H1 (cell line): ENCODE measurements at regions of chr19 and their contacts with region 1.

Region 1: DNA sequence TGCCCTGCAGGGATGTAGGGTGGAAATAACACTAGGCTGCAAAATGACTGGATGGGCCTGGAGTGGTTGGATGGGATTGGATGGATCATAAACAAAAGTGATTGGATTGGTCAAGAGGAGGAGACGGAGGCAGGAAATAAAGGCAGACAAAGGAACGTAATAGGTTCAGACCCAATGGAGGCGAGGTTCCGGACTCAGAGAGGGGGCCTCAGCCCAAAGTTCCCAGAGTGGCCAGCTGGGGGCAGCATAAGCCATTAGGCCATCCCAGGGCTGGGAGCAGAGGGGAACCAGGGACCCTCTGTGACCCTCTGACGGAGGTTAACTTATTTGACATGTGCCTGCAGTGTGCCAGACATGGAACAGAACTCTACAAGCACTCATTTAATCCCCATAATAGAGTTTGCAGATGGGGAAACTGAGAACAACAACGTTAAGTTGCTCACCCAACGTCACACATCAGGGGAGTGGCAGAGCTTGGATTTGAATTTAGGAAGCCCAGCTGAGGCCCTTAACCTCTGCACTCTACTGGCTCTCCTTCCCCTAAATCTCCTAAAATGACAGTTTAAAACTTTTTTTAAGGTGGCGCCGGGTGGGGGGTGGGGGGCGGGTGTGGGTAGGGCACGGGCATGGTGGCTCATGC is 15.3 kb upstream of the MAP1S start:
- DNase-seq: peak in 1 of 2 experiments; percentile 95
- H3K4me3 ChIP-seq: no peak overlapping the region
- H3K27ac ChIP-seq: no peak overlapping the region
- H3K4me1 ChIP-seq: no peaks in the 10 kb centered on the region; a peak in 2 of 7 replicates
- H3K27me3 ChIP-seq: peaks cover 0 to 6% (median 5%) of the 10 kb centered on the region in 4 experiments; a peak in 4 of 7 replicates
- CTCF ChIP-seq: peak; percentile 81 to 93 (median 89)
- EP300 ChIP-seq: no peak
- POLR2A ChIP-seq: no peak
- RAD21 ChIP-seq: peak; percentile 71 to 80

Region 2: DNA sequence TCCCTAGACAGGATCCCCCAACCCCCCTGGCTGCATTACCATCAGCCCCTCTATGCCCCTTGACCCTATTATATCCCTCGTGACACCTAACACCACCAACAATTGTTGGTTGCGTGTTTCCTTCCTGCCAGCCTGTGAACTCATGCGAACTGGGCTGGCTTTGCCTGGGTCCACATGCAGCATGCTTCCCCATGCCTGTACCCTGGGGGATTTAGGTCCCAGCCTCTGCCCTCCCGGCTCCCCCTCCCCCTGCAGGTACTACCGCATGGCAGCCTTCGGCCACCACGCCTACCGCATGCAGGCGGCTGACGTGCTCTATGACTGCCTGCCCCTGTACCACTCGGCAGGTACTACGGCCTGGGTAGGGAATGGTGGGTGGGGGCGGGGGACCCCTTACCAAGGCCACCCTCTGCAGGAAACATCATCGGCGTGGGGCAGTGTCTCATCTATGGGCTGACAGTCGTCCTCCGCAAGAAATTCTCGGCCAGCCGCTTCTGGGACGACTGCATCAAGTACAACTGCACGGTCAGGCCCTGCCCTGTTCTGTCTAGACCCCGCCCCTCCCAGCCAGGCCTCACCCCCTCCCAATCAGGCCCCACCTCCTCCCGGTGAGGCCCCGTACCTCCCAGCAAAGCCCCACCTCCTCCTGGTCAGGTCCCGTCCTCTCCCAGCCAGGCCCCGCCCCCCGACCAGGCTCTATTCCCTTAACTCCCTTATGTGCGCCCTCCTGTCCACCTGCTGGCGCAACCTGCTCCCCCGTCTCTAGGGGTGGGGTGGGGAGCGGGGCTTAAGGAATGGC is 215.2 kb before region 1 on chr19:
- CTCF ChIA-PET with region 1: no interaction called
- POLR2A ChIA-PET with region 1: no interaction called
- DNase-seq: peak; percentile 96 to 97
- H3K4me3 ChIP-seq: peak overlapping the region; percentile 14 to 65 (median 50); a peak in 7 of 8 replicates
- H3K27ac ChIP-seq: no peak overlapping the region
- H3K4me1 ChIP-seq: peaks cover 0 to 19% (median 15%) of the 10 kb centered on the region in 4 experiments; a peak in 6 of 7 replicates
- H3K27me3 ChIP-seq: no peaks in the 10 kb centered on the region
- CTCF ChIP-seq: peak; percentile 71 to 86 (median 84)
- EP300 ChIP-seq: no peak
- POLR2A ChIP-seq: peak; percentile 29 to 71; a peak in 2 of 3 replicates
- RAD21 ChIP-seq: peak; percentile 48 to 58

Region 3: GRCh38 chr19:17681505-17682125 is 22.3 kb before region 1 on chr19:
- CTCF ChIA-PET with region 1: interaction called, 14 read pairs
- POLR2A ChIA-PET with region 1: interaction called, 3 read pairs
- DNase-seq: peak in 1 of 2 experiments; percentile 90
- H3K4me3 ChIP-seq: no peak overlapping the region
- H3K27ac ChIP-seq: no peak overlapping the region
- H3K4me1 ChIP-seq: peaks cover 2 to 17% (median 10%) of the 10 kb centered on the region in 4 experiments
- H3K27me3 ChIP-seq: no peaks in the 10 kb centered on the region
- CTCF ChIP-seq: no peak
- EP300 ChIP-seq: no peak
- POLR2A ChIP-seq: no peak
- RAD21 ChIP-seq: no peak

Region 4: GRCh38 chr19:17687857-17688784 is 15.8 kb before region 1 on chr19 and contains the start of gene UNC13A:
- CTCF ChIA-PET with region 1: interaction called, 24 read pairs
- POLR2A ChIA-PET with region 1: interaction called, 6 read pairs
- DNase-seq: peak in 1 of 2 experiments; percentile 98
- H3K4me3 ChIP-seq: peak within 1 kb of the TSS; percentile 72 to 97 (median 84)
- H3K27ac ChIP-seq: no peak within 1 kb of the TSS
- H3K4me1 ChIP-seq: peaks cover 5 to 15% (median 11%) of the 10 kb centered on the region in 4 experiments
- H3K27me3 ChIP-seq: no peaks in the 10 kb centered on the region
- CTCF ChIP-seq: no peak; a peak in 1 of 4 replicates
- EP300 ChIP-seq: no peak; a peak in 1 of 3 replicates
- POLR2A ChIP-seq: 0 out of 3 replicates have a peak, but pooled peaks of 1 of the 2 experiments have one; percentile 19
- RAD21 ChIP-seq: no peak; a peak in 1 of 4 replicates
- total RNA-seq, gene UNC13A: 45.0 and 47.6 TPM in 2 replicates

Region 5: DNA sequence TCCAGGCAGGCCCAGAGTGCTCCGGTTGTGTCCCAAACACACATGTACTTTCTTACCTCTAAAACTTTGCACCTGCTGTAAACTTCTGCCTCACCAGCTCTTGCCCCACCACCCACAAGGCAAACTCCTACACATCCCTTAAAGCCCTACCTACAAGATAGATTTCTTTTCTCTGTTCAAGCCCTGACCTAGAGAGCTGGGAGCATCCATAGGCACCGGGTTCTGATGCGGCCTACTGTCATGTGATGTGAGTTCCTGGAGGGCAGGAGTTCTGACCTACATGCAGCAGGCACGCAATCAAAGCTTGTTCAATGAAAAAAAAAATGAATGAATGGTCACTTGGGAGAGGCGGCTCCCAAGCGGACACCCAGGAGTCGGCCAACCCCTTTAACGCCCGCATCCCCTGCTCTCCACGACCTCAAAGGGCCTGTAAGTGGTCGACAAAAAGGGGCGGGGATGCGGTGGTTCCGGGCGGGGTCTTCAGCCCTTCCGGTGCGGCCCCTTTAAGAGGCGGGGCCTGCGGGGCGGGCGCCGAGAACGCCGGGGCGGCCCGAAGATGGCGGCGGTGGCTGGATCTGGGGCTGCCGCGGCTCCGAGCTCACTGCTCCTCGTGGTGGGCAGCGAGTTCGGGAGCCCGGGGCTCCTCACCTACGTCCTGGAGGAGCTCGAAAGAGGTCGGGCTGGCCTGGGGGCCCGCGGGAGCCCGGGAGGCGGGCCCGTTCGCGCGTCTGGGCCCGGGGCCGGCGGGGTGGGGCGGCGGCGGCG is 15.2 kb after region 1 on chr19 and contains the start of gene MAP1S:
- CTCF ChIA-PET with region 1: interaction called, 34 read pairs
- POLR2A ChIA-PET with region 1: interaction called, 13 read pairs
- DNase-seq: peak; percentile 50 to 91
- H3K4me3 ChIP-seq: peak within 1 kb of the TSS; percentile 75 to 100 (median 83)
- H3K27ac ChIP-seq: no peak within 1 kb of the TSS; the same call in 1 of the 2 replicates
- H3K4me1 ChIP-seq: peaks cover 4 to 13% (median 6%) of the 10 kb centered on the region in 4 experiments
- H3K27me3 ChIP-seq: no peaks in the 10 kb centered on the region
- CTCF ChIP-seq: no peak
- EP300 ChIP-seq: no peak
- POLR2A ChIP-seq: peak in 1 of 2 experiments; percentile 89; a peak in 2 of 3 replicates
- RAD21 ChIP-seq: no peak
- total RNA-seq, gene MAP1S: 115 and 116 TPM in 2 replicates

Region 6: GRCh38 chr19:17749912-17750317 is 46.0 kb after region 1 on chr19:
- CTCF ChIA-PET with region 1: interaction called, 10 read pairs
- POLR2A ChIA-PET with region 1: no interaction called
- DNase-seq: no peak
- H3K4me3 ChIP-seq: no peak overlapping the region
- H3K27ac ChIP-seq: no peak overlapping the region
- H3K4me1 ChIP-seq: peaks cover 0 to 5% (median under 1%) of the 10 kb centered on the region in 4 experiments; a peak in 4 of 7 replicates
- H3K27me3 ChIP-seq: no peaks in the 10 kb centered on the region
- CTCF ChIP-seq: no peak
- EP300 ChIP-seq: no peak
- POLR2A ChIP-seq: no peak
- RAD21 ChIP-seq: no peak

Region 7: DNA sequence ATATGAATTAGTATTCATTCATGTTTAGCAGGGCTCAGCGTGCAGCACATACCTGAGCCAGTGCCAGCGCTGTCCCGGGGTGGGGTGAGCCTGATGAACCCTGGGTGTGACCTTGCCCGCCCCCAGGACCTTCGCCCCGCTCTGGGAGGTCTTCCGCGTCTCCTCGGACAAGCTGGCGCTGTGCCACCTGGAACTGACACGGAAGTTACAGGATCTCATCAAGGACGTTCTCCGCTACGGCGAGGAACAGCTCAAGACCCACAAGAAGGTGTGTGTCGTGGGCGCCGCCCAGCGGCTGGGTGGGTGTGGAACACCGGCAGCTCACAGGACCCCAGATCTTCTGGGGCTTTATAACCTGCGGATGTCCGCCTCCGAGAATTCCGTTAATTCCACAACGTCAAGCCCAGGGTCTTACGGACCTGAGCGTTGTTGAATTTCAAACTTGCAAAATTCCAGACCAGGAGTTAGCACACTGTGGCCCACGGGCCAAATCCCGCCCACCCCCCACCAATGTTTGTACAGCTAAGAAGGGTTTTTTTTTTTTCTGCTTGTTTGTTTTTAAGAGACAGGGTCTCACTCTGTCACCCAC is 62.7 kb after region 1 on chr19:
- CTCF ChIA-PET with region 1: interaction called, 19 read pairs
- POLR2A ChIA-PET with region 1: interaction called, 3 read pairs
- DNase-seq: peak; percentile 82 to 94
- H3K4me3 ChIP-seq: no peak overlapping the region
- H3K27ac ChIP-seq: no peak overlapping the region
- H3K4me1 ChIP-seq: peaks cover 0 to 2% (median 0%) of the 10 kb centered on the region in 4 experiments; a peak in 3 of 7 replicates
- H3K27me3 ChIP-seq: no peaks in the 10 kb centered on the region
- CTCF ChIP-seq: peak; percentile 94 to 97 (median 95)
- EP300 ChIP-seq: no peak
- POLR2A ChIP-seq: no peak
- RAD21 ChIP-seq: peak; percentile 96 to 97

Region 8: DNA sequence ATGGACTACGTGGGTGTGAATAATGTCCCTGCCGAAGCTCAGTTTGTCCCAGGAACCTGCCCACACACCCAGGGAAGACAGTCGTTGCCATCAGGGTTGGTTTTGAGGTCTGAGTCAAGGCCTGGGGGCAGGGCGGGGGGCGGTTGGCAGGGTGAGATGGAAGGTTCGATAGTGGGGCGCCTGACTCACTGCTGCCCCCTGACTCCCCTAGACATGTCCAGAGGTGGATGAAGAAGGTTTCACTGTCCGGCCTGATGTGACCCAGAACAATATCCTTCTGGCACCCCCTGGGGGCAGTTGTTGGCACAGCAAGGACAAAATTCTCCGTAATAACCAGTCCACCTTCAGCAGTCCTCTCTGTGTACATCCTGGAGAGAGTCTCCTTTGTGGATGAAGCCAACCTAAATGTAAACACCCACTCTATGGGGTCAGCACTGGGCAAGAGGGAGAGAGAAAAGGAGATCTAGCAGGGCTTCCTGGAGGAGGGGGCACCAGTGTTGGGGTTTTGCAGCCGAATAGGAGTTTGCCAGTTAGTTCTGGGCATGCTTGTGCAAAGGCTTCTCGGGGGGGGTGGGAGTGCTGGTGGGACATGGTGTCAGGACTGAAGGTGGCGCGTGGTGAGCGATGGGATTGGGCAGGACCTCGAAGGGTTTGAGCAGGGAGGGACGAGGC is 71.4 kb after region 1 on chr19:
- CTCF ChIA-PET with region 1: interaction called, 10 read pairs
- POLR2A ChIA-PET with region 1: interaction called, 3 read pairs
- DNase-seq: peak in 1 of 2 experiments; percentile 92
- H3K4me3 ChIP-seq: no peak overlapping the region
- H3K27ac ChIP-seq: no peak overlapping the region
- H3K4me1 ChIP-seq: peaks cover 0 to 9% (median 6%) of the 10 kb centered on the region in 4 experiments; a peak in 5 of 7 replicates
- H3K27me3 ChIP-seq: no peaks in the 10 kb centered on the region
- CTCF ChIP-seq: peak; percentile 62 to 90 (median 87)
- EP300 ChIP-seq: no peak
- POLR2A ChIP-seq: no peak
- RAD21 ChIP-seq: peak; percentile 55 to 76